ENCODE measurements at regions of chr19 and their contacts with region 1.

Region 1: GRCh38 chr19:51570962-51571575 is at the start of gene ZNF175:
- DNase-seq: peak; percentile 92
- H3K4me3 Mint-ChIP-seq: peak within 1 kb of the TSS; percentile 86
- H3K27ac Mint-ChIP-seq: peak within 1 kb of the TSS; percentile 70
- H3K4me1 Mint-ChIP-seq: peaks cover 30% of the 10 kb centered on the region
- H3K27me3 Mint-ChIP-seq: peaks cover 4% of the 10 kb centered on the region
- total RNA-seq, gene ZNF175: 7.1 to 7.9 TPM

Region 2: DNA sequence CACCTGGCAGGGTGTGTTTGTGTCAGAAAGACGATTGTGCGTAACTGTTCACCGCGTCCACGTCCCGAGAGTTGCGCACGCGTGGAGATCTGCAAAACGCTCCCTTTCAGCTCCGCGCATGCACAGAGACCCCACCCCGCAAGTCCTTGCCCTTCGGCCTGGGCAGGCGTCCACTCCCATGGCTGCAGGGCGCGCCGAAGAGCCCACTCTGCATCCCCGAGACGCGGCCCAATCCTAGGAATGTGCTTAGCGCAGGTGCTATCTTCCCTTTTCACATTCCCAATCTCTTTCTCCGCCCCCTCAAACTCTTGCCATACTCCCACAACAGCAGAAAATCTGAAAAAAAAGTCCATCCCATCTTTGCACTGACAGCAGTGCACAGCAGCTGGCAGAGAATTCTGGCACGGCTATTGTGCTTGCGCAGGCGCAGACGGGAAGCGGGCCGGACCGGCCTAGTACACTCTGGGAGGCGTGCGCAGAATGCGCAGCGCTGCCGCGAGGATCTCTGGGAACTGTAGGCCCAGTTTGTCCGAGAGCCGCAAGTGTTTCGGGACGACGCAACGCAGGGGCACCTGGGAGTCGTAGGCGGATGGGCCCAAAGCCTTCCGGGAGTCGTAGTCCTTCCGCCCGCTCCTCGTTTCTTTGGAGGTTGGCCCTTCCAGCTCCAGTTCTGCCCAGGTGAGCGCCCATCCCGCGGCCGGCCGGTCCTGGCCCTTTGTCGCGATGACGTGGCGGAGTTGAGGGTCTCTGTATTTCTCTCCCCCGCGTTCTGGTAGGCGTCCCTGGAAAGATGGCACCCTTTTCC is 23.1 kb after region 1 on chr19:
- CTCF ChIA-PET with region 1: no interaction called
- POLR2A ChIA-PET with region 1: no interaction called
- intact Hi-C with region 1: loop called (anchors 1 kb)
- DNase-seq: peak; percentile 97
- H3K4me3 Mint-ChIP-seq: peak overlapping the region; percentile 81
- H3K27ac Mint-ChIP-seq: peak overlapping the region; percentile 13
- H3K4me1 Mint-ChIP-seq: peaks cover 16% of the 10 kb centered on the region
- H3K27me3 Mint-ChIP-seq: peaks cover 3% of the 10 kb centered on the region

Region 3: GRCh38 chr19:51651216-51651846 is 80.3 kb after region 1 on chr19:
- CTCF ChIA-PET with region 1: no interaction called
- POLR2A ChIA-PET with region 1: no interaction called
- intact Hi-C with region 1: loop called (anchors 10 kb)
- DNase-seq: no peak
- H3K4me3 Mint-ChIP-seq: no peak overlapping the region
- H3K27ac Mint-ChIP-seq: no peak overlapping the region
- H3K4me1 Mint-ChIP-seq: no peaks in the 10 kb centered on the region
- H3K27me3 Mint-ChIP-seq: peaks cover 15% of the 10 kb centered on the region